Activated CD8-positive, alpha-beta T cell treated with anti-CD3 and anti-CD28 coated beads, Interleukin-2, amount 10 ng/mL, durations not matched to agents 7 days and 5 days (primary cell): ENCODE measurements at regions of chr14 and their contacts with region 1.

Region 1: GRCh38 chr14:49633640-49634546 is 1.2 kb downstream of the DNAAF2 start:
- DNase-seq: peak; percentile 96
- ATAC-seq: peak; percentile 82
- H3K4me3 Mint-ChIP-seq: peak overlapping the region; percentile 86
- H3K27ac Mint-ChIP-seq: peak overlapping the region; percentile 97
- H3K4me1 Mint-ChIP-seq: peaks cover 49% of the 10 kb centered on the region
- H3K27me3 Mint-ChIP-seq: no peaks in the 10 kb centered on the region

Region 2: DNA sequence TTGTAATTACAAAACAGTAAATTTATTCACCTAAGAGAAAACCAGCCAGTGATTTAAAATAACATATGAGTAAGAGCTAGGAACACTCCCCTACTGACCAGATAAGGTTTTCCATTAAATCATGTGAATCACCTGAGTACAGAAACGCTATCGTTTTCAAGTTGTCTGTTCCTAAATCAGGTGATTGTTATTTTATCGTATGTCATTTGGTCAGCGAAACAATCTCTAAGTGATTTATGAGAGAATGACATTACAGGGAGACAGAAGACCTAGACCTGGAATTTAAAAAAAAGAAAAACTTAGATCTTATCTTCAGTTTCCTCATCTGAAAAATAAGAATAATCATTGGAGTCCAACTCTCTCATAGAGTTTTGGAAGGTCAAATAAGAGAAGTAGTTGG is 95.0 kb before region 1 on chr14:
- CTCF ChIA-PET with region 1: no interaction called
- POLR2A ChIA-PET with region 1: no interaction called
- DNase-seq: no peak
- ATAC-seq: no peak
- H3K4me3 Mint-ChIP-seq: no peak overlapping the region
- H3K27ac Mint-ChIP-seq: no peak overlapping the region
- H3K4me1 Mint-ChIP-seq: no peaks in the 10 kb centered on the region
- H3K27me3 Mint-ChIP-seq: no peaks in the 10 kb centered on the region

Region 3: DNA sequence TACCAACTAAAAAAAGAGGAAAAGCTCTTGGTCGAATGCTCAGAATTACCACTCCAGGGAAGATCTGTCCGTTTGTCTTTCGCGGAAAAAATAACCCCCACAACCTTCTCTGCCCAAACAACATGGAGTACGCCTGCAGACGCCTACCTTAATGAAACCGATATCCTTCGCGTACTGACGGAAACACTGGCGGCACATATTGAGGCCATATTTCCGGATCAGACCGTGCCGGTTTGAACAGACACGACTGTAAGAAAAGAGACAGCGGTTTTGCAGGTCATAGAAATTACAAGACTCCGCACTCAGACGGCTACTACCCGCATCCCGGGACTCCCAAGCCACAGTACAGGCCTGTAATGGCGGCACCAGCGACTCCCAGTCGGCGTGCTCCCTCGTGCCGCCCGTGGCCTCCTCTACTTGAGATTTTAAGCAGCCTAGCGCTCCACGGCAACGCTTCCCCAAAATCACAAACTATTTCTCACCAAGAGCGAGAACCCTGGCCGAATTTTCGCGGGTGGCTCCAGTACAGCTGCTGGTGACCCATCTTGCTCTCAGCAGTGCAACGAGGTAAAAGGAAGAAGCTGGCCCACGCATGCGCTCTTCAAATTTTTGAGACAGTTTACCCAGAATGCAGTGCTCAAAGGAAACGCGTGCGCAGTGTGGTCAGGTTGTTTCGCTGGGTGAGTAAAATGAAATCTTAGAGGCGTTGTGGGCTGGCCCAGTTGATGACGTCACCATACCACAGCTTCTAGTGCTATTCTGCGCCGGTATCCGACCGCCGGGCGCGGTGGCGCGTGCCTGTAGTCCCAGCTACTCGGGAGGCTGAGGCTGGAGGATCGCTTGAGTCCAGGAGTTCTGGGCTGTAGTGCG is 47.9 kb before region 1 on chr14 and contains the start of gene RPS29:
- CTCF ChIA-PET with region 1: interaction called, 14 read pairs
- POLR2A ChIA-PET with region 1: interaction called, 28 read pairs
- DNase-seq: peak; percentile 99
- ATAC-seq: peak; percentile 93
- H3K4me3 Mint-ChIP-seq: peak within 1 kb of the TSS; percentile 81
- H3K27ac Mint-ChIP-seq: peak within 1 kb of the TSS; percentile 99
- H3K4me1 Mint-ChIP-seq: peaks cover 38% of the 10 kb centered on the region
- H3K27me3 Mint-ChIP-seq: no peaks in the 10 kb centered on the region
- total RNA-seq, gene RPS29: 1,224 to 1,602 TPM

Region 4: DNA sequence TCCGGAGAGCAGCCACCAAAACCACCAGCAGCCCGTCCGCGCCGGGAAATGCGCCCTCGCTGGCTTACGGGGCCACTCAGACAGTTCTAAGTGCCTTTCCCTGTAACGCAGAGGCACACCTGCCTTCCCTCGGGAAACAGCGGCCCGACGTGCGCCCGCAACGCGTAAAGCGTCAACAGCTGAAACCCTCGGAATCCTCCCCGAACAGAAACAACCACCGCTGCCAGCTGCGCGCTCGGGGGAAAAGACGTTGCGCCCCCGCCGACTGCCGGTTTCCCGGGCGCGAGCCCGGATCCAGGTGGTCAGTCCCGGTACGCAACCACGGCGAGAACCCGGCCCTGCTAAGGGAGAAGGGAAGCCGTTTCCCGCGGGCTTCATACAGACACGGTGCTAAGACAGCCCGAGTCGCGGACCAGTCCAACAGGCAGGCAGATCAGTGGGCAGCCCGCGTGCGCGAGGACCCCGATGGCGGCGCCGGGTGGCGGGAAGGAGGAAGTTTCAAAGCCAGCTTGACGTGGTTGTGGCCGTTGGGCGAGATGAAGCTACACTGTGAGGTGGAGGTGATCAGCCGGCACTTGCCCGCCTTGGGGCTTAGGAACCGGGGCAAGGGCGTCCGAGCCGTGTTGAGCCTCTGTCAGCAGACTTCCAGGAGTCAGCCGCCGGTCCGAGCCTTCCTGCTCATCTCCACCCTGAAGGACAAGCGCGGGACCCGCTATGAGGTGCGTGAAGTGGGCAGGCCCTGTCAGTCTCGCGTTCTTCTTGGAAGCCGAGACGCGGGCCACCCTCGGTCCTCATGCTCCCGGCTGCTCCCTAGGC is 35.2 kb before region 1 on chr14 and contains the start of gene LRR1:
- CTCF ChIA-PET with region 1: interaction called, 3 read pairs
- POLR2A ChIA-PET with region 1: interaction called, 11 read pairs
- DNase-seq: peak; percentile 90
- ATAC-seq: peak; percentile 86
- H3K4me3 Mint-ChIP-seq: peak within 1 kb of the TSS; percentile 99
- H3K27ac Mint-ChIP-seq: peak within 1 kb of the TSS; percentile 99
- H3K4me1 Mint-ChIP-seq: peaks cover 37% of the 10 kb centered on the region
- H3K27me3 Mint-ChIP-seq: no peaks in the 10 kb centered on the region
- total RNA-seq, gene LRR1: 63.1 to 65.0 TPM

Region 5: GRCh38 chr14:49620182-49621113 is 13.4 kb before region 1 on chr14 and contains the starts of genes MGAT2 and RPL36AL:
- CTCF ChIA-PET with region 1: interaction called, 118 read pairs
- POLR2A ChIA-PET with region 1: interaction called, 66 read pairs
- DNase-seq: peak; percentile 97
- ATAC-seq: peak; percentile 91
- H3K4me3 Mint-ChIP-seq: peak within 1 kb of the TSS; percentile 93
- H3K27ac Mint-ChIP-seq: peak within 1 kb of the TSS; percentile 96
- H3K4me1 Mint-ChIP-seq: peaks cover 58% of the 10 kb centered on the region
- H3K27me3 Mint-ChIP-seq: no peaks in the 10 kb centered on the region
- total RNA-seq, gene MGAT2: 55.1 to 57.4 TPM
- total RNA-seq, gene RPL36AL: 229 to 241 TPM

Region 6: DNA sequence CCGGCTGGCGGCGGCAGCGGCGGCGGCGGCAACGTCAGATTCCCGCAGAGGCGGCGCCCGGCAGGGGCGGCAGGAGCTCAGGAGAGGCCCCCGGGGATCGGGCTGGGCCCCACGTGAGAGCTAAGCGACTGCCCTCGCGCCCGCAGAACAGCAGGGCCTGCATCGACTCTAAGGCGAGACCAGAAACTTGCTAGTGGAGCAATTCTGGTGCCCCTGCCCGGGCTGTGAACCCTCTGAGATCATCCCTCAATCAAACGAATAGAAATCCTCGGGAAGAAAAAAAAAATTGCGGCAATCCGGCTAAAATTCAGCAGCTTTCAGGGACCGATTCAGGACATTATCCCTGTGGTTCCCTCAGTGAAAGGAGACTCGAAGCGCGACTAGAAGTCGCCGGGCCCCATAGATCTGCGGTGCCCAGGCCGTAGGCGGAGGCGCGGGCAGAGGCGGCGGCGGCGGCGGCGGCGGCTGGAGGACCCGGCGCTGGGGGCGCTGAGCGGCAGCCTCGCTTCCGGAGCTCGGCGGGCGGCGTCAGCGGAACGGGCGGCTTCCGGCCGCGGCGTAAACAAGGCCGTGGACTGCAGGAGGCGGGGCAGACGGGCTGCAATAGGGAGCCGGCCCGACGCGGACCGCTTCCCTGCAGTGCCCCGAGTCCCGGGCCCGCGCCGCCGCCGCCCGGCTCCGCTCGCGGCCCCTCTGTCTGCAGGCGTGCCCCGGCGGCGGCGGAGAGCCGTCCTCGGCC is 133.8 kb after region 1 on chr14 and contains the start of gene KLHDC2:
- CTCF ChIA-PET with region 1: interaction called, 48 read pairs
- POLR2A ChIA-PET with region 1: interaction called, 31 read pairs
- DNase-seq: peak; percentile 92
- ATAC-seq: peak; percentile 88
- H3K4me3 Mint-ChIP-seq: peak within 1 kb of the TSS; percentile 98
- H3K27ac Mint-ChIP-seq: peak within 1 kb of the TSS; percentile 99
- H3K4me1 Mint-ChIP-seq: peaks cover 26% of the 10 kb centered on the region
- H3K27me3 Mint-ChIP-seq: no peaks in the 10 kb centered on the region
- total RNA-seq, gene KLHDC2: 24.9 to 25.5 TPM

Region 7: GRCh38 chr14:49786315-49787110 is 152.6 kb after region 1 on chr14:
- CTCF ChIA-PET with region 1: interaction called, 11 read pairs
- POLR2A ChIA-PET with region 1: no interaction called
- DNase-seq: no peak
- ATAC-seq: no peak
- H3K4me3 Mint-ChIP-seq: no peak overlapping the region
- H3K27ac Mint-ChIP-seq: no peak overlapping the region
- H3K4me1 Mint-ChIP-seq: no peaks in the 10 kb centered on the region
- H3K27me3 Mint-ChIP-seq: no peaks in the 10 kb centered on the region

Region 8: GRCh38 chr14:49828640-49829039 is 194.7 kb after region 1 on chr14:
- CTCF ChIA-PET with region 1: interaction called, 34 read pairs
- POLR2A ChIA-PET with region 1: interaction called, 3 read pairs
- DNase-seq: no peak
- ATAC-seq: no peak
- H3K4me3 Mint-ChIP-seq: no peak overlapping the region
- H3K27ac Mint-ChIP-seq: no peak overlapping the region
- H3K4me1 Mint-ChIP-seq: peaks cover 4% of the 10 kb centered on the region
- H3K27me3 Mint-ChIP-seq: no peaks in the 10 kb centered on the region